Gastrocnemius medialis (tissue), 4 donors: ENCODE measurements at regions of chr3 and their contacts with region 1.

Region 1: DNA sequence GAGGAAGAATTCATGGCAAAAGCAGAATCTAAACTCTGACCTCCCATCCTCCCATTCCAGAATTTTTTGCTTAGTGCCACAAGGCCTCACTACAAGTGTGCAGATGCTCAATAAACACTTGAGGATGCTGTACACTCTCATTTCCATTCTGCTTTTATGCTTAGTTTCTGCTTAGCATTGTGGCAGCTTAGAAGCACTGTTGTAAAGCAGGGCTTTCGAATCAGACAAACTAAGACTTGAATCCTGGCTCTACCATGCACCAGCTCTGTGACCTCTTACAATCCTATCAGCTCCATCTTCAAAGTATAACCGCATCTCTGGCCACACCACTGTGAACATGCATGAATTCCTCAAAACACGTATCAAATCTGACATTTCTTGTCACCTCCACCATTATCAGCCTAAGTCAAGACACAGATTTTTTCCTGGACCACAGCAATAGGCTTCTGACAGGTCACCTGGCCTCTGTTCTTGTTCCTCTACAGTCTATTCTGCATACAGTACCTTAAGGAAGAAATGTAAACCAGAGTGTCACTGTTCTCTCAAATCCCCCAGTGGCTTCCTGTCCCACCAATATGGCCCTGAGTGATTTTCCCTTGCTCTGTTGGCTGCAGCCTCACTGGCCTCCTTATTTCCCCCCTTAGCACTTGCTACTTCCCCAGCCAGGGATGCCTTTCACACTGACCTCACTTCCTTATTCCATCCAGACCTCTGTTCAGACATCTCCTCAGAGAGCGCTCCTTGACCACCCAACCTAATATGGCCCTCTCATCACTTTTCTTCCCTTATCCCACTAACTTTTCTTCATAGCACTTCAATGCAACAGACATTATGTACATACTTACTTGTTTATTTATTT is 8.1 kb upstream of the PHC3 start:
- DNase-seq: no peak
- ATAC-seq: no peak
- H3K4me3 ChIP-seq: no peak overlapping the region
- H3K27ac ChIP-seq: no peak overlapping the region
- H3K4me1 ChIP-seq: no peaks in the 10 kb centered on the region
- H3K27me3 ChIP-seq: no peaks in the 10 kb centered on the region
- CTCF ChIP-seq: no peak
- POLR2A ChIP-seq: no peak

Region 2: DNA sequence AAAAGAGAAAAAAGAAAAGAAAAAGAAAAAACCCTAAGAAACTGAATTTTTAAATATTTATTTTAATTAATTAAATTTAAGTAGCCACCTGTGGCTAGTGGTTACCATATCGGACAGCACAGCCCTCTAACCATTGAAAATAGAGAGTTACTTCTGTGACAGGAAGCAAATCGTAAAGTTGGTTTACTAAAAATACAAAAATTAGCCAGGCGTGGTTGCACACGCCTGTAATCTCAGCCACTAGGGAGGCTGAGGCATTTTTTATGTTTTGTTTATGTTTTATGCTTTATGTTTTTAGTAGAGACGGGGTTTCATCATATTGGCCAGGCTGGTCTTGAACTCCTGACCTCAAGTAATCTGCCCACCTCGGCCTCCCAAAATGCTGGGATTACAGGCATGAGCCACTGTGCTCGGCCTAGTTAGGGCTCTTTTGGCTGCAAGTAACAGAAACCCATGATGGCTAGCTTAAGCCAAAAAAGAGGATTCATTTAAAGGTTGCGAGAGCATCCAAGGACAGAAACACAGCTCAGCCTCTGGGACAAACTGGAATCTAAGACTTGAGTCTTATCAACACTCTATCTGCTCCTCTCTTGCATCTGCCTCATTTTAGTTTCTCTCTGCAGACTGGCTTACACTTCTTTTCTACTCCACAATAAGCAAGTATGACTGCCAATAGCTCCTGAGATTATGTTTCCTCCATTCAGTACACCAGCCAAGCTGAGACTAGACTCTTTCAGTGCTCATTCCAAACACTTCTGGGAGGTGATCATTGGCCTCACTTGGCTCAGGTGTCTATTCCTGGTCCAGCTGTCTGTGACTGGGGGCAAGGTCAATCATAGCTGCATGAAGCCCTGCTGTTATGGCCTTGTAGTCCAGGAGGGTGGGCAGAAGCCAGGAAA is 161.1 kb after region 1 on chr3:
- in situ Hi-C with region 1: no loop called
- intact Hi-C with region 1: loop called (anchors 1 kb)
- DNase-seq: no peak
- ATAC-seq: peak in 1 of 2 donors; percentile 84
- H3K4me3 ChIP-seq: no peak overlapping the region
- H3K27ac ChIP-seq: peak overlapping the region; percentile 3 to 61 (median 43)
- H3K4me1 ChIP-seq: peaks cover 12 to 14% of the 10 kb centered on the region in 2 donors
- H3K27me3 ChIP-seq: no peaks in the 10 kb centered on the region
- CTCF ChIP-seq: no peak
- POLR2A ChIP-seq: no peak

Region 3: DNA sequence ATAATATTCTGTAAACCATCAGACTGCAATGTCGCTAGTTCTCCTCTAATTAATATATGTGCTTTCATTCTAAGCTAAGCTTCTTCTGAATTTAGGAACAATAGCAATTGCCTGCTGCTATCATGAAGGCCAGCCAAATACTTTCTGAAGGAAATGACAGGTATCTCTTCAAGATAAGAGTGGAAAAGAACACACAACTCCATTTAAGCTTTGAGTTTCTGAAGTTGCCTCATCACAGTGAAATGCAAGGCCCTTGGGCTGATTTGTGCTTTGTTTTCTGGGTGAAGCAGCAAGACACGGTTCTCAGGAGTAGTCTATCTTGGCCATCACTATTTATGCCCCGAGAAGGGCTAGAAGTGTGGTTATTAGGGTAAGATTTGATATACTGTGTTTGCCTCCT is 390.0 kb after region 1 on chr3:
- in situ Hi-C with region 1: no loop called
- intact Hi-C with region 1: no loop called
- DNase-seq: no peak
- ATAC-seq: no peak
- H3K4me3 ChIP-seq: no peak overlapping the region
- H3K27ac ChIP-seq: no peak overlapping the region
- H3K4me1 ChIP-seq: no peaks in the 10 kb centered on the region
- H3K27me3 ChIP-seq: peaks cover 10 to 18% (median 14%) of the 10 kb centered on the region in 3 donors
- CTCF ChIP-seq: no peak
- POLR2A ChIP-seq: no peak